ENCODE measurements at regions of chr13 and their contacts with region 1.

Region 1: GRCh38 chr13:101307181-101307701 is 109.1 kb downstream of the NALCN start:
- DNase-seq: no peak
- H3K4me3 ChIP-seq: no peak overlapping the region
- H3K27ac ChIP-seq: no peak overlapping the region
- H3K4me1 ChIP-seq: peaks cover 23% of the 10 kb centered on the region
- H3K27me3 ChIP-seq: no peaks in the 10 kb centered on the region
- CTCF ChIP-seq: no peak

Region 2: GRCh38 chr13:101178406-101178805 is 128.8 kb before region 1 on chr13:
- CTCF ChIA-PET with region 1: no interaction called
- dilution Hi-C with region 1: loop called (anchors 10 kb)
- in situ Hi-C with region 1: no loop called
- intact Hi-C with region 1: no loop called
- DNase-seq: no peak
- H3K4me3 ChIP-seq: no peak overlapping the region
- H3K27ac ChIP-seq: no peak overlapping the region
- H3K4me1 ChIP-seq: no peaks in the 10 kb centered on the region
- H3K27me3 ChIP-seq: no peaks in the 10 kb centered on the region
- CTCF ChIP-seq: no peak